SK-N-SH (cell line): ENCODE measurements at regions of chr2 and their contacts with region 1.

Region 1: DNA sequence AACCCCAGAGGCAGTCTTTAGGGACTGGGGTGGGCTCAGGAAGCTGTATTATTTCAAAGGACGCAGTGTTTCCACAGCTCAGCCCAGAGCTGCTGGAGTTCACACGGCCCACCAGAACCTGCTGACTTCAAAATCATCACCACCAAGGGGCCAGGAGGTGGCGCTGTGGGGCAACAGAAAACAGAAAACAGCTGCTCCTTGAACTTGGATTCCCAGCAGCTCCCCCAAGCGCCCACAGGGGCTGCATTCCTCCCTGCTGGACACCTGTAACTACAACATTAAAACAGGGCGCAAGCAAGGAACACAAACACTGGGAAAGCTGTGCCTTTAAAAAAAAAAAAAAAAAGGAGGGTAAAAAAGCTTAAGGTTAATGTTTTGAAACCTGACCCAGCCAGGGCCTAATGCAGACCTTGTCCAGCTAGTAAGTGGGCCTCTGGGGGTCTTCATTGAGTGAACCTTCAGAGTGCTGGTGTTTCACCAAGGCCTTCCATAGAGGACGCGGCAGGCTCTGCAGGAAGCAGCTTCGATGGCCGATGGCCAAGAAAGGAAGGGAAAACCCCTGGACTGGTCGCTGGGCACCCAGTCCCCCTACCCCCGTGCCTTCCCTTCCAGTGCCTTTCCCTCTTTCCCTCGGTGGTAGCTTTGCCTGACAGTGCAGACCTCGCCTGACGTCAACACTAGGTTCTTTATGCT is 25.9 kb downstream of the MLPH start:
- DNase-seq: peak; percentile 91
- H3K4me3 ChIP-seq: peak overlapping the region in 1 of 2 experiments; percentile 33; a peak in 1 of 4 replicates
- H3K27ac ChIP-seq: peak overlapping the region in 1 of 2 experiments; percentile 100; a peak in 2 of 4 replicates
- H3K4me1 ChIP-seq: peaks cover 2 to 12% of the 10 kb centered on the region in 2 experiments; a peak in 2 of 4 replicates
- H3K27me3 ChIP-seq: no peaks in the 10 kb centered on the region
- CTCF ChIP-seq: peak; percentile 96
- EP300 ChIP-seq: no peak
- RAD21 ChIP-seq: peak; percentile 93

Region 2: GRCh38 chr2:237085248-237086221 is 427.4 kb before region 1 on chr2 and contains the start of gene COPS8:
- CTCF ChIA-PET with region 1: interaction called, 14 read pairs
- POLR2A ChIA-PET with region 1: no interaction called
- DNase-seq: peak; percentile 95
- H3K4me3 ChIP-seq: peak within 1 kb of the TSS; percentile 77 to 98
- H3K27ac ChIP-seq: peak within 1 kb of the TSS; percentile 85 to 94
- H3K4me1 ChIP-seq: peaks cover 0 to 18% of the 10 kb centered on the region in 2 experiments; a peak in 2 of 4 replicates
- H3K27me3 ChIP-seq: no peaks in the 10 kb centered on the region
- CTCF ChIP-seq: peak; percentile 42
- EP300 ChIP-seq: peak in 1 of 2 experiments; percentile 47; a peak in 2 of 4 replicates
- RAD21 ChIP-seq: no peak
- polyA plus RNA-seq, gene COPS8: 107 and 123 TPM in 2 replicates

Region 3: DNA sequence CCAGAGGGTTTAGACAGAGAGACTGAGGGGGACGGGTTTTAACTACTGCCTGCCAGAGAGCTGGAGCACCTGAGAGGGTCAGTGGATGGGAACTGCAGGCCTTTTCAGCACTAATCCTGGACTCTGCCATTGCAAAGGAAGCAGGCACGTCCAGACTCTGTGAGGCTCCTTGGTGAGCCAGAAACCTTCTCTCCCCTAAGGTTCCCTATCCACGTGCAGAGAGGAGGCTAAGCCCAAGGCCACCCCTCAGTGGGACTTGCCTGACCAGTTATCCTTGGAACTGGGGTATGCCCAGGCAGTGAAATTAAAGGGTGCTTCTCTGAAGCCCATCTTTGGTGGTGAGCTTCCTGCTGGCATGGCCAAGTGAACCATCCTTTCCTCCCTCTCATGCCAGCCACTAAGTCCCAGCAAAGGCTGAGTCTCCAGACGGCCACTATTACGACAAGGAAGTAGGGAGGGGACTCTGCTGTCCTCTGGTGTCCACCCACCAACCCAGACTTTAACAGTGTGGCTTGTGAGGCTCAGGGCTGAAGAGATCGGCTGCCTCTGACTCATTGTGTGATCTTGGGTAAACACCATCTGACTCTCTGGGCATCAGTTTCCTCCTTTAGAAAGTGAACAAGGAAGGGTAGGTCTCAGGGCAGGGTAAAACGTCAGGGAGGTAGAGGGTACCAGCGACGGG is 29.7 kb before region 1 on chr2:
- CTCF ChIA-PET with region 1: interaction called, 20 read pairs
- POLR2A ChIA-PET with region 1: no interaction called
- DNase-seq: no peak
- H3K4me3 ChIP-seq: no peak overlapping the region
- H3K27ac ChIP-seq: peak overlapping the region; percentile 56 to 87
- H3K4me1 ChIP-seq: peaks cover 14 to 29% of the 10 kb centered on the region in 2 experiments; a peak in 3 of 4 replicates
- H3K27me3 ChIP-seq: no peaks in the 10 kb centered on the region
- CTCF ChIP-seq: peak; percentile 54
- EP300 ChIP-seq: no peak
- RAD21 ChIP-seq: no peak

Region 4: DNA sequence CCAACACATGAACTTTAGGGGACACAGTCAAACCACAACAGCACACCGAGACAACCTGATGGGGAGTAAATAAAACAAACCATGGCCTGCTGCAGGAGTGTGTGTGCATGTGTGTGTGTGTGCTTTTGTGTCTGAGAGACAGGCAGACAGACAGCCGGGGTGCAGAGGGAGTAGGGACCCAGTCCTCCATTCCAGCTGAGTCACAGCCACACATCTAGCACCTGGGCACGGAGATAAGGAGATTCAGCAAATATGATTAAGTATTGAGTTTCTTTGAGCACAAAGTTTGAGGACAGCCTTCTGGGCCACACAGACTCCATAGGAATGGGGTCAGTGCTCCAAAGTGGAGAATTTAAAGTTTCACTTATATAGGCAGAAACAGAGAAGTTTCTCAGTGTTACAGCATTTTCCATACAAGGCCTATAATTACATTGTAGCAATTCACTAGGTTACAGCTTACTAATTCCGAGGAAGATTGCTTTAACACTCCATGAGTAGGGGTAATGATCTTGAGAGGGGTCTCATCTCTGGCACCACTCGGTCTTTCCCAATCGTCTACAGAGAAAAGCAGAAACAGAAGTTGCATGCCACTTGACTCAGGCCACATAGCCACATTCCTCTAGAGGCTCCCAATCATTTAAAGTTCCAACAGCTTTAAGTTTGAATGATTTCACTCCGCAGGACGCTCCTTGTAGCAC is 22.6 kb after region 1 on chr2:
- CTCF ChIA-PET with region 1: interaction called, 28 read pairs
- POLR2A ChIA-PET with region 1: no interaction called
- DNase-seq: no peak
- H3K4me3 ChIP-seq: no peak overlapping the region
- H3K27ac ChIP-seq: no peak overlapping the region
- H3K4me1 ChIP-seq: peaks cover 0 to 4% of the 10 kb centered on the region in 2 experiments; a peak in 1 of 4 replicates
- H3K27me3 ChIP-seq: no peaks in the 10 kb centered on the region
- CTCF ChIP-seq: no peak
- EP300 ChIP-seq: no peak
- RAD21 ChIP-seq: no peak

Region 5: GRCh38 chr2:237558906-237559641 is 46.2 kb after region 1 on chr2:
- CTCF ChIA-PET with region 1: interaction called, 24 read pairs
- POLR2A ChIA-PET with region 1: no interaction called
- DNase-seq: no peak
- H3K4me3 ChIP-seq: no peak overlapping the region
- H3K27ac ChIP-seq: no peak overlapping the region
- H3K4me1 ChIP-seq: peaks cover 0 to 6% of the 10 kb centered on the region in 2 experiments; a peak in 1 of 4 replicates
- H3K27me3 ChIP-seq: no peaks in the 10 kb centered on the region
- CTCF ChIP-seq: no peak
- EP300 ChIP-seq: no peak
- RAD21 ChIP-seq: no peak

Region 6: DNA sequence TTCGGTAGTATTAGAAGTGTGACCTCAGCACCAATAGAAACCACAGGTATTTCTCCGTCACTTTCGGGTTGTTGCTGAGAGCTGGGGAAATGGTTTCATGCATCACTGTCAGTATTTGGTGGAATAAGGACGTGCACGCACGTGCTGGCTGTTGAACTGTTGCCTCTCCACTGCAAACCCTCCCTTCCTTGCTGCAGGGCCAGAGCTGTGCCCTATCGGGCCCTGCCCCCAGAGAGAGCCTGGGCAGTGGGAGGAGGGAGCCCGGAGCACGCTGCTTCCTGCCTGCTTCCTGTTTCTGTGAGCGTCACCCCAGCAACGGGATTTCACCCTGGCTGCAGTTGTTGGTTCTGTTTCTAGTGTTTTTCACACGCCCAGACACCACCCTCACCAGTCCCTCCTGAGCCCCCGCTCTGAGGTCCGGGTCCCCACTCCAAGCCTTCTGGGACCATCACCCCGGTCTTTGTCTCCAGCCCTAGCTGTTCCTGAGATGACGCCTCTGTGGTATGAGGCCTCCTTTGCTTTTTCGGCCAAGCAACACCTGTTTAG is 161.9 kb after region 1 on chr2:
- CTCF ChIA-PET with region 1: interaction called, 18 read pairs
- POLR2A ChIA-PET with region 1: no interaction called
- DNase-seq: peak; percentile 90
- H3K4me3 ChIP-seq: no peak overlapping the region; a peak in 1 of 4 replicates
- H3K27ac ChIP-seq: peak overlapping the region; percentile 76 to 92
- H3K4me1 ChIP-seq: peaks cover 35 to 51% of the 10 kb centered on the region in 2 experiments
- H3K27me3 ChIP-seq: no peaks in the 10 kb centered on the region
- CTCF ChIP-seq: no peak
- EP300 ChIP-seq: no peak
- RAD21 ChIP-seq: peak; percentile 36; the same call in 1 of the 2 replicates

Region 7: DNA sequence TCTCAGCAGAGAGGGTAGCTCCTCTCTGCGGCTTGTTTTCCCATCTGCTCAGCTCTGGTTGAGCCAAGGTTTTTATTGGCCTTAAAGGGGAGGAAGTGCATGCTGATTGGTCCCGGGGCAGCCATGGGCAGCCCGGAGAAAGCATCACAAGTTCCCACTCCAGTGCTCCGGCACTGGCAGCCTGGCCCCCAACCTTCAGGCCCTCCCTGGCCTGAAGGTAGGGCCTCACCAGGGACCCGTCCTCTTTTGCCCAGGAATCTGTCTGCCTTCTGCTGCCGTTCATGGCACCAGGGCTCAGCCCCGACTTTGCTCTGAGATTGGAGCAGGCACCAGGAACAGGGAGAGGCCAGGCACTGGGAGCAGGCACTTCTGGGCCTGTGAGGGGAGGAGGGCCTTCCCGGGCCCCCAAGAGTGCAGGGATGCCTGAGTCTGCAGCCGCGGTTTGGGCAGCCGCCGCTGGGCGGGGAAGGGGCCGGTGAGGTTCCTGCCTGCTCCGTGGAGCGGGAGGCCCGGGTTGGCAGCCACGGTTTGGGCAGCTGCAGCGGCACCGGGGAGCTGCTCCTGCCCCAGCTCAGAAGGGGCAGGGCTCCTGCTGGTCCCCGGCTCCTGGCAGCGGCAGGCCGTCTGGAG is 708.1 kb after region 1 on chr2:
- CTCF ChIA-PET with region 1: no interaction called
- POLR2A ChIA-PET with region 1: no interaction called
- DNase-seq: no peak
- H3K4me3 ChIP-seq: no peak overlapping the region
- H3K27ac ChIP-seq: no peak overlapping the region
- H3K4me1 ChIP-seq: no peaks in the 10 kb centered on the region; a peak in 1 of 4 replicates
- H3K27me3 ChIP-seq: no peaks in the 10 kb centered on the region
- CTCF ChIP-seq: no peak
- EP300 ChIP-seq: no peak
- RAD21 ChIP-seq: no peak